ENCODE measurements at regions of chr3 and their contacts with region 1.

Region 1: DNA sequence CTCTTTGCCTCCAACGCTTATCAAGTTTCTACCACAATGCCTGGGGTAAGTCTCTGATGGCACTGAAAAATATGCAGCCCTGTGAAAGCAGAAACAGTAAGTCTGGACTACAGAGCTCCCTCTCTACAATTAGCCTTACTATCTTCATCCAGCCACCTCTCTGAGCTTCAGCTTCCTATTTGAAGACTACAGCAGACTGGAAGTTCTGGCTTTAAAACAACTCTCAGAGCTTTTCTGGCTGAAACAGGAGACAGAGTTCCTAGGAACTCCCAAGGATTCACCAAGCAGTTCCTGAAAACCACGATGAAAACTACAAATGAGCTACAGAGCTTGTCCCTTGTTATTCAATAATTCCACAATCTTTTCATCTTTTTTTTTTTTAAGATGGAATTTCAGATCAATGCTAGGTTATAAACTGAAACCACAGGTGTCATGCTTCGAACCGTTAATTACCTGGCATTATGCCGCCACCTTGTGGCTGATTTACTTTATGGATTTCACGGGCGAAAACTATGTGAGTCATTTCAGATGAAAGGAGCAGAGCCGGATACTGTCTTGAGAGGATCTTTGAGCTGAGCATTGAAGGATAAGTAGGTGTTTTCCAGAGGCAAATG is 3.9 kb downstream of the CRYGS start:
- DNase-seq: peak; percentile 42 to 80
- ATAC-seq: peak; percentile 95

Region 2: DNA sequence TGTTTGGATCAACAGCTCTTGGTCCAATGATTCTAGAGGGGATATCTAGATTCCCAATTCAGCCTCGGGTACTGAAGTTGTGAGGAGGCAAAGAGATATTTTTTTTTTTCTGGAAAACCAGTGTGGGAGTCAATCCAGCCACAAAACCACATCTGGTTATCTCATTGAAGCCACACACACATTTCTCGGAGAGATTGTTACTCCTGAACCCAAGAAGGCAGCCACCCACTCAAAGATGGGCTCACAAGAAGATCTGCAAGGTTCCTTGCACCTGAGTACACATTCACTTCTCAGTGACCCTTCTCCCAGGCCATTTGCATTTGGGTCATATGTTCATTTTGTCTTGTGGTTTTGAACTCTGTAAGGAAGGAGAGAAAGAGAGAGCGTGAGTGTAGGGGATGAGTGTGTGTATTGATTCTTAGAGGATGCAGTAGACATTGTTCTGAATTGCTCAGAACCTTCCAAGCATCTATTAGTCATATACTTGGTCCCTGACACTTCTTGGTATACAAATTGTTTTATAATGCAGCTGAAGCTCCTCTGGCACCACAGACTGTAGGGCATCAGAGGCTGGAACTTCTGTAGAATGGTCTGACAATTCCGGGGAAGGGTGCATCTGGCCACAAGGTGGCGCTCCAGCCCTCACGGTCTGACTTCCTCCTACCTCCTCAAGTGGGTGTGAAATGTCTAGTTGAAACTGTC is 563.2 kb before region 1 on chr3:
- intact Hi-C with region 1: loop called (anchors 5 to 10 kb)
- DNase-seq: peak; percentile 62 to 91
- ATAC-seq: peak; percentile 90

Region 3: GRCh38 chr3:185983495-185984141 is 556.7 kb before region 1 on chr3:
- intact Hi-C with region 1: loop called (anchors 5 to 10 kb)
- DNase-seq: peak; percentile 46 to 73
- ATAC-seq: peak; percentile 89

Region 4: DNA sequence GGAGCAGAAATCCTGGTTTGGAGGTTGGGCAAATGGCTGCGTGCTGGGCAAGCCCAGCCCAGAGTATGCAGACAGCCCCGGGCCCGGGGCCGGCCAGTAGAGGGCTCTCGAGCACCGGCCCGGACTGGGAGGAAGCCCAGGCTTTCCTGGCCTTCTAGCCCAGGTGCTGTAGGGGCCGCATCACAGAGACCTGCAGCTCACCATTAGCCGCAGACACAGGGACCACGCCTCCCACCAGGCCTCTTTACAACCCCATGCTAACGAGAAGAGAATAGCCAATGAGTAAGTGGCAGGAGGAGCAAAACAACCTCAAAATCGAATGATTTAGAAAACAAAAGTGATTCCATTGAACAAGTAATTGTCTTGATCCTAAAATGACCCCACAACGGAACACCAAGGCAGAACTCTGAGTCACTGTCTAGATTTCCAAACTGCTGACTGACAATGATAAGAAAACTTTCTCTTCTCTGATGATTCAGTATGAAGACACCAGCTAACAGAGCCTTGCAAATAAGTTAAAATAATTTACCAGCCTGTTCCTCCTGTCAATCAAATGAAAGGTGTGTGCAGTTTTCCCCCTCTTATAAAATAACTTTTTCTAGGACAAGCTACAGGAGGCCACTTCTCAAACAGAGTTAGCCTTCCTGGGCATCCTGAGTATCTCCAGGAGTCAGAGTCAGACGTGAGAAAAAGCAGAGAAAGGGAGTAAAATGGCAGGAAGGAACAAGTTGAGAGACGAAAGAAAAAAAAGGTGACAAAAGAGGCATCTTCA is 280.5 kb before region 1 on chr3:
- intact Hi-C with region 1: loop called (anchors 2 to 10 kb)
- DNase-seq: peak; percentile 33 to 76
- ATAC-seq: peak; percentile 99

Measured in left colon (tissue), 2 donors.